ENCODE measurements at regions of chr10 and their contacts with region 1.

Region 1: DNA sequence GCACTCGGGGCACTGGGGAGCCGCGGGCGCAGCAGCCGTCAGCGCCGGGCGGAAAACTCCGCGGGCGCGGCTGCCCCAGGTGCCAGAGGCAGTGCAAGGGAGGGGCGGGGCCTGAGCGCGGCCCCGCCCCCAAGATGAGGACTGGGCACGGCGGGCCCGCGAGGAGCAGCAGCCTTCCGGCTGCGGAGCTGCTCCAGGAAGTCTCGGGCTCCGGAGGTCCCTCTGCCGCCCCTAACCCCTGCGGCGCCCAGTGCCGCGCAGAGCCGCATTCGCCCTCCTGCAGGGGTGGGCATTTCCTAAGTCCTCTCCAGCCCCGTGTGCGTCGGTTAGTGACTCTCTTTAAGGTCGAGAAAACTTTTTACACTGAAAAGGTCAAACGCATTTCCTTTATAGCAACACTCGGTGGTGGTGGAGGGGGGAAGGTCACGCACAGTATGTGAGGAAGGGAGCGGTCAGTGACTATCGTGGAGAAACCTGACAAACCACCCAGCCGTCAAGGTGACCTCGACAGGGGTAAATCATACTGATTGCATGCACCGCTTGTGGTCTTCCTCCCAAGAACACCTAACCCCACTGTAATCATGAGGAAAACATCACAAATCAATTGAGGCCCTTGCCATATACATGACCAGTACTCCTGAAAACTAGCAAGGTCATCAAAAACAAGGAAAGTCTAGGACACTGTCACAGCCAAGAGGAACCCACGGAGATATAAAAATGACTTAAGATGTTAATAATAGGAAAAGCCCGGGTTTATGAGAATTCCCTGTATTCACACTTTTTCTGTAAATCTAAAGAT is at the start of gene ANXA11:
- DNase-seq: no peak
- H3K4me3 ChIP-seq: peak within 1 kb of the TSS; percentile 84
- CTCF ChIP-seq: no peak

Region 2: DNA sequence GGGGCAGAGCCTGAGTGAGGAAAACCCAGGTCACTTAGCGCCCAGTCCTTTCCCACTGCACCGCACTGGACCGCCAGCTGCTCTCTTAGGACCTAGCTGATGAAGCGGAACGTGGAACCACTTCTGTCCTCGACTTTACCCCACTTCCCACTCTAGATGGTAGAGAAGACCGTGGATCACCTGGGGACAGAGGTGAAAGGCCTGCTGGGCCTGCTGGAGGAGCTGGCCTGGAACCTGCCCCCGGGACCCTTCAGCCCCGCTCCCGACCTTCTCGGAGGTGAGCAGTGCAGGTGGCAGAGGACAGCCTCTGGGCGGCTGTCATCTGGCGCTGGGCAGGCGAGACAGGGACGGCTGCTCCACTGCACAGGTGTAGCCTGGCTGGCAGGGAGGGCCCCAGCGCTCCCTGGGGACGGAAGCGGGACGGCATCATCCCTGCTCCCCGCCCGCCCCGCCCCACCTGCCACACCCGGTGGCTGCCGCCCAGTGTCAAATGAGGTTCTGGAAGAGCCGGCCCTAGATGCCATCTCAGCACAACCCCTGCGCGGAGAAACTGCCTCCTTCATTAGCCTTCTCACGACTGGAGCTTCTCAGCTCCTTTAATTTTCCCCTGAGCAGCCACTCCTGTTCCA is 61.5 kb before region 1 on chr10:
- in situ Hi-C with region 1: loop called (anchors 5 kb)
- DNase-seq: no peak
- H3K4me3 ChIP-seq: no peak overlapping the region
- CTCF ChIP-seq: no peak